ENCODE measurements at regions of chr2 and their contacts with region 1.

Region 1: GRCh38 chr2:156435715-156436496 is at the start of gene GPD2:
- DNase-seq: peak; percentile 94 to 96
- ATAC-seq: peak; percentile 91 to 95 (median 92)
- H3K4me3 ChIP-seq: peak within 1 kb of the TSS; percentile 86
- H3K27ac ChIP-seq: peak within 1 kb of the TSS; percentile 100
- H3K4me1 ChIP-seq: peaks cover 57% of the 10 kb centered on the region
- H3K27me3 ChIP-seq: no peaks in the 10 kb centered on the region
- CTCF ChIP-seq: no peak
- total RNA-seq, gene GPD2: 16.3 to 86.6 (median 35.8) TPM

Region 2: GRCh38 chr2:156341452-156342253 is 94.3 kb before region 1 on chr2:
- intact Hi-C with region 1: loop called (anchors 2 to 5 kb)
- DNase-seq: peak; percentile 91 to 93
- ATAC-seq: peak; percentile 78 to 88 (median 82)
- H3K4me3 ChIP-seq: peak overlapping the region; percentile 89
- H3K27ac ChIP-seq: peak overlapping the region; percentile 100
- H3K4me1 ChIP-seq: peaks cover 34% of the 10 kb centered on the region
- H3K27me3 ChIP-seq: no peaks in the 10 kb centered on the region
- CTCF ChIP-seq: no peak

Region 3: GRCh38 chr2:156400706-156401678 is 34.9 kb before region 1 on chr2:
- intact Hi-C with region 1: loop called (anchors 1 to 5 kb)
- DNase-seq: peak; percentile 63 to 78
- ATAC-seq: peak; percentile 84 to 91 (median 87)
- H3K4me3 ChIP-seq: peak overlapping the region; percentile 85
- H3K27ac ChIP-seq: peak overlapping the region; percentile 95
- H3K4me1 ChIP-seq: peaks cover 26% of the 10 kb centered on the region
- H3K27me3 ChIP-seq: no peaks in the 10 kb centered on the region
- CTCF ChIP-seq: no peak

Region 4: DNA sequence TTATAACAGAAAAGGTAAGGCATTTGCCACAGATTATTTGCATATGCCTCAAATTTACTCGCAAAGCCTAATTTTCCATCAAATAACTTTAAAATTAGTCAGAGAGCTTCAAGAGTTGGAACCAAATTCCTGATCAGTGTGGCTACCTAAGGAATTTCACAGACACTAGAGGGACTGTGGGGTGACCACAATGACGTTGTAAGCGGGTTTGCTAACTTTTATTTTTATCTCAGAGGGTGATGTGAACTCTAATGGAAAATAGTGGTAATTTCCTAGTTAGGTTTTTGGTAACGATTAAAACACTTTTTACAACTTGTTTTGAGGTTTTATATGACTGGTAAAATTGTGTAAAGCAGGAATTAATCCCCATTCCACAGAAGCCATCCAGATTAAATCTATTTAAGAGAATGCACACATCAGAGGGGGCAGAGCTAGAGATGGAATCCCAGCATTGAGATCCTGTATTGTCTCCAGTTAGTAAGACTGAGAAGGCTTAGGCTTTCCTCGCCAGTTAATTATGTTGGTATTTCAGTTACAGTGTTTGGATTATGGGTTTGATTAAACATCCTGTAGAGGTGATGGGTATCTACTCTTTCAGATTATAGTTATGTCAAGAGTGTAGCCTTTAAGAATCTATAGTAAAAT is 129.3 kb after region 1 on chr2:
- intact Hi-C with region 1: no loop called
- DNase-seq: no peak
- ATAC-seq: no peak
- H3K4me3 ChIP-seq: no peak overlapping the region
- H3K27ac ChIP-seq: no peak overlapping the region
- H3K4me1 ChIP-seq: peaks cover 11% of the 10 kb centered on the region
- H3K27me3 ChIP-seq: no peaks in the 10 kb centered on the region
- CTCF ChIP-seq: no peak